ENCODE measurements at regions of chr3 and their contacts with region 1.

Region 1: DNA sequence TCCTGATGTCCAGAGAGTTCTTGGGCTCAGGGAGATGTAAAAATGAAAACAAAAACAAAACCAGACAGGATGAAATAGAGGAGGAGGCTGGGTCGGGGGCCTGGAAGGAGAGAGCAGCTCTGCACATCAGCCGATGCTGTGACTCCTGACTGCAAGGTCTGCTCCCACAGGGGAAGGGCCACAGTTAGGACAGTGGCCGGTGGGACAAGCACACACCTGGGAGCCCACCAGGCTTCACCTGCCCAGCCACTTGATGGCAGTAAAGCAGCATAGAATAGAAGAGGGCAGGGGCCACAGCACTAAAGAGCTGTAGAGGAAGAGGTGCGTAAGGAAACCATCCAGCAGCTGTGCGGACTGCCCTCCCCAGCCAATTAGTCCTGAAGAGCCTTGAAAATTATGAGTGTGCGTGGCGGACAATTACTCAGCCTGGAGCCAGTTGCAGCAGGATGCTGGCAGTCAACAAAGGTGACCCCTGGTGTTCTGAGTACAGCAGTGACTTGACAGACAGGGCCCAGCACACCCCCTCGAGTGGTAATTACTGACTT is 29.8 kb downstream of the ALS2CL start:
- DNase-seq: no peak
- H3K4me3 ChIP-seq: no peak overlapping the region
- H3K27ac ChIP-seq: no peak overlapping the region
- H3K4me1 ChIP-seq: peaks cover 21% of the 10 kb centered on the region
- H3K27me3 ChIP-seq: no peaks in the 10 kb centered on the region
- CTCF ChIP-seq: peak; percentile 21 to 45

Region 2: DNA sequence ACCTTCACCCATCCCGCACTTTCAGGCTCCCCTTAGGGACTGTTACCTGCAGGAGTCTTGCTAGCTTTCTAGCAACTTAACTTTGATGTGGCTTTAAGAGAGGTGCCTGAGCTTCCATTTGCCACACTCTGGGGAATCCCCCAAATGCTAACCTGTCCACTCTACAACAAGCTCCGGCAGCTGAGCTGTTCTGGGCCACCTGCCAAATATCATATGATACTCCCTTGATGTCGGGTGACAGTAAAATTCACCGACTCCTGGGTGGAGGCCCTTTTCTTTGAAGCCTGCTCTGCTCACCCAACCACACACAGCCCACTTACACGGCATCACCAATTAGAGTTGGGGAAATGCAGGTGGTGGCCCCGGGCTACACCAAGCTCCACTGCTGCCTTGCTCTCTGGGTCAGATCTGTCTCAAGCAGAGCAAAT is 598.4 kb before region 1 on chr3:
- CTCF ChIA-PET with region 1: no interaction called
- dilution Hi-C with region 1: no loop called
- in situ Hi-C with region 1: no loop called
- intact Hi-C with region 1: no loop called
- DNase-seq: peak; percentile 87
- H3K4me3 ChIP-seq: no peak overlapping the region
- H3K27ac ChIP-seq: no peak overlapping the region
- H3K4me1 ChIP-seq: peaks cover 4% of the 10 kb centered on the region
- H3K27me3 ChIP-seq: peaks cover 4% of the 10 kb centered on the region
- CTCF ChIP-seq: no peak

Region 3: DNA sequence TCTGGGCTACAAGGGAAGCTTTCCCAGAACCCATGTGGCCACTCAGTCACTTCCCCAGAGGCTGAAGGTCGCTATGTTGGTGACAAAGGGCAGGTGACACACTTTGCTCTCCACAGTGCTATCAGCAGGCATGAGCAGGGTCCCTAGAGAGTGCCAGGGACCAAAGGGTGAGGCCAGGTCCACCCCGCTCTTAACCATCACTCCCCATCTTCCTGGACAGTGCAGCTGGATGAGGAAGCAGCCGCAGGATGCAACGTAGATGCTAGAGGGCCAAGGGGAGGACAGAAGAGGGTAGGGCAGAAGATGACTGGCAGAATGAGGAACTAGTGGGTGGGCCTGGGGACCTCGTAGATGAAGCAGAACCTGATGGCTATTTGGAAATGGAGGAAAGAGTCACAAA is 185.3 kb before region 1 on chr3:
- CTCF ChIA-PET with region 1: no interaction called
- dilution Hi-C with region 1: loop called (anchors 5 kb)
- in situ Hi-C with region 1: no loop called
- intact Hi-C with region 1: no loop called
- DNase-seq: no peak
- H3K4me3 ChIP-seq: no peak overlapping the region
- H3K27ac ChIP-seq: no peak overlapping the region
- H3K4me1 ChIP-seq: peaks cover 5% of the 10 kb centered on the region
- H3K27me3 ChIP-seq: peaks cover 4% of the 10 kb centered on the region
- CTCF ChIP-seq: no peak

Region 4: DNA sequence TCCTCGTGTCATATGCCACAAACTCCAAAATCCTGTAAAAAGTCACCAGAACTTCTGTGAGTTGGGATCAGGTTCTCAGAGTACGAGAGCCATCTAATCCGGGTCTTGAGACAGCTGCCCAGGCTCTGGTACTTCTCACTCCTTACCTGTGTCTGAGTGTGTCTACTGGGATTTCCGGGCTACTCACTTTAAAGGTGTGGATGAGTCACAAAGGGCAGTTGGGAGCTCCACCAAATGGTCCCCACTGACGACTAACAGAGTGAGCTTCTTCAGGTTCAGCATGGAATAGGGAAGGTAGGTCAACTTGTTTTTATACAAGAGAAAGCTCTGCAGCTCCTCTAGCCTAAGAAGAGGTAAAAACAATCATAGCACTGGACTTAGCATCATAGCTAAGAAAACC is 136.4 kb before region 1 on chr3:
- CTCF ChIA-PET with region 1: no interaction called
- dilution Hi-C with region 1: no loop called
- in situ Hi-C with region 1: no loop called
- intact Hi-C with region 1: no loop called
- DNase-seq: peak; percentile 64
- H3K4me3 ChIP-seq: no peak overlapping the region
- H3K27ac ChIP-seq: no peak overlapping the region
- H3K4me1 ChIP-seq: peaks cover 7% of the 10 kb centered on the region
- H3K27me3 ChIP-seq: no peaks in the 10 kb centered on the region
- CTCF ChIP-seq: no peak

Region 5: DNA sequence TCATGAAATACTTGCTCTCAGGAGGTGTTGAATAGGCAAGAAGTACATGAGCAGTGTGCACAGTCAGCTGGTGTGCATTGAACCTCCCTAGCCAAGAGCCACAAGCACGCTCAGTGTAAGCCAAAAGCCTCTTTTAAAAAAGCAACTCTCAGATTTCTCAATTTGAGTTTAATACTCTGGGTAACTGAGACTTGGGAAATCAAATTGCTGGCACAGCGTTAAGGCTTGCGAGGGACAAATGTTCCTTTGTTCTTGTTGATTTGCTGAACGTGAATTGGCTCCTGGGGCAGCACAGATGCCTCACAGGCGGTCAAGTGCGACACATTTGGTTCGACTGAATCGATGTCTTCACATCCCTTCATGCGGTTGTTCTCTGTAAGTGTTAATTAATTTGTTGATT is 51.3 kb before region 1 on chr3 and contains the start of gene FAM240A:
- CTCF ChIA-PET with region 1: no interaction called
- dilution Hi-C with region 1: loop called (anchors 5 kb)
- in situ Hi-C with region 1: no loop called
- intact Hi-C with region 1: no loop called
- DNase-seq: peak; percentile 41
- H3K4me3 ChIP-seq: no peak within 1 kb of the TSS
- H3K27ac ChIP-seq: no peak within 1 kb of the TSS
- H3K4me1 ChIP-seq: no peaks in the 10 kb centered on the region
- H3K27me3 ChIP-seq: peaks cover 5% of the 10 kb centered on the region
- CTCF ChIP-seq: no peak
- total RNA-seq, gene FAM240A: not detected